K562 (cell line): ENCODE measurements at regions of chr1 and their contacts with region 1.

Region 1: GRCh38 chr1:108708691-108709660 is 3.7 kb upstream of the FNDC7 start:
- DNase-seq: peak in 3 of 4 experiments; percentile 29 to 80 (median 59)
- ATAC-seq: peak; percentile 91
- H3K4me3 ChIP-seq: no peak overlapping the region
- H3K27ac ChIP-seq: no peak overlapping the region
- H3K4me1 ChIP-seq: no peaks in the 10 kb centered on the region
- H3K27me3 ChIP-seq: peaks cover 0 to 3% of the 10 kb centered on the region in 2 experiments; a peak in 1 of 5 replicates
- CTCF ChIP-seq: peak; percentile 82 to 89 (median 86)
- EP300 ChIP-seq: no peak
- POLR2A ChIP-seq: no peak
- RAD21 ChIP-seq: peak; percentile 50 to 80

Region 2: DNA sequence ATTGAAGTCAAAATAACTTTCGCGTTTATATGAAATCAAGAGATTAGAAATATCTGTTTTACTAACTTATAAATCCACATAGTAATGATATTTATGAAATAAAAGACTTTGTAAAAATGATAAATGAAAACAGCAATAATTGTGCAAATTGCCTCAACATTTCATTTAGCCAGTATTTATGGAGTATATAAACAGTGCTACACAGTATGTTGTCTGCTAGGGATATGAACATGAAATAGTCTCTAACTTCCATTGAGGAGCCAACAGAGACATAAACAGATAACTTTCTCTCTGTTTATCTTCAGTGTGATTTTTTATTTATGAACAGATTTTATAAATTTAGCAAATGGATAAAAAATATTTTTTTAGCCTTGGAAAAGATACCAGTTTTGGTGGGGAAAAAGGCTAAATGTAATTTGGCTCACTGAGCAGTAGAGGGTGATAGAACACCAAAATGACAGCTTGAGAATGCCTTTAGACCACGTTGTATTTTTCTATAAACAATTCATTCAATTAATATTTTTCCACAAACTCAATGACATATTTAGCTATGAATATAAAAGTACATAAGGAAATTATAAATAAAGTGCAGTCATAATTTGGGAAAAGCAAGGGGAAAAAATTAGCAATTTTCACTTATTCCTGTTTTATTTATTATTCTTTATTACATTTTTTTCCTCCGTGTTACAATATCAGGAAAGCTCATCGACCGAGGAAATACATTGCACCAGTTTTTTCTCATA is 196.6 kb before region 1 on chr1:
- CTCF ChIA-PET with region 1: no interaction called
- POLR2A ChIA-PET with region 1: interaction called, 3 read pairs
- in situ Hi-C with region 1: no loop called
- intact Hi-C with region 1: loop called (anchors 2 kb)
- DNase-seq: peak; percentile 31 to 68 (median 48)
- ATAC-seq: peak; percentile 87
- H3K4me3 ChIP-seq: no peak overlapping the region
- H3K27ac ChIP-seq: no peak overlapping the region
- H3K4me1 ChIP-seq: no peaks in the 10 kb centered on the region
- H3K27me3 ChIP-seq: no peaks in the 10 kb centered on the region
- CTCF ChIP-seq: peak; percentile 77 to 99 (median 81)
- EP300 ChIP-seq: no peak
- POLR2A ChIP-seq: no peak
- RAD21 ChIP-seq: peak; percentile 100

Region 3: GRCh38 chr1:108691942-108692723 is 16.8 kb before region 1 on chr1 and contains the start of gene PRPF38B:
- CTCF ChIA-PET with region 1: no interaction called
- POLR2A ChIA-PET with region 1: interaction called, 97 read pairs
- in situ Hi-C with region 1: no loop called
- intact Hi-C with region 1: no loop called
- DNase-seq: peak; percentile 96 to 99 (median 98)
- ATAC-seq: peak; percentile 91
- H3K4me3 ChIP-seq: peak within 1 kb of the TSS; percentile 74
- H3K27ac ChIP-seq: peak within 1 kb of the TSS; percentile 94
- H3K4me1 ChIP-seq: peaks cover 5 to 7% of the 10 kb centered on the region in 2 experiments; a peak in 3 of 5 replicates
- H3K27me3 ChIP-seq: no peaks in the 10 kb centered on the region
- CTCF ChIP-seq: no peak
- EP300 ChIP-seq: 0 out of 2 replicates have a peak, but pooled peaks have one; percentile 10
- POLR2A ChIP-seq: peak; percentile 99
- RAD21 ChIP-seq: no peak
- polyA plus RNA-seq, gene PRPF38B: 25.3 to 34.3 TPM

Region 4: GRCh38 chr1:108719656-108720435 is 10.9 kb after region 1 on chr1:
- CTCF ChIA-PET with region 1: no interaction called
- POLR2A ChIA-PET with region 1: interaction called, 12 read pairs
- in situ Hi-C with region 1: no loop called
- intact Hi-C with region 1: no loop called
- DNase-seq: peak; percentile 27 to 51 (median 34)
- ATAC-seq: peak; percentile 73
- H3K4me3 ChIP-seq: no peak overlapping the region
- H3K27ac ChIP-seq: no peak overlapping the region; the same call in 2 of the 3 replicates
- H3K4me1 ChIP-seq: peaks cover 0 to 10% of the 10 kb centered on the region in 2 experiments; a peak in 3 of 5 replicates
- H3K27me3 ChIP-seq: peaks cover 19 to 20% of the 10 kb centered on the region in 2 experiments; a peak in 4 of 5 replicates
- CTCF ChIP-seq: no peak
- EP300 ChIP-seq: no peak
- POLR2A ChIP-seq: no peak
- RAD21 ChIP-seq: no peak

Region 5: GRCh38 chr1:108816049-108816893 is 107.3 kb after region 1 on chr1:
- CTCF ChIA-PET with region 1: no interaction called
- POLR2A ChIA-PET with region 1: no interaction called
- in situ Hi-C with region 1: no loop called
- intact Hi-C with region 1: loop called (anchors 5 kb)
- DNase-seq: peak; percentile 25 to 53 (median 35)
- ATAC-seq: peak; percentile 74
- H3K4me3 ChIP-seq: no peak overlapping the region
- H3K27ac ChIP-seq: no peak overlapping the region
- H3K4me1 ChIP-seq: peaks cover 0 to 14% of the 10 kb centered on the region in 2 experiments; a peak in 3 of 5 replicates
- H3K27me3 ChIP-seq: no peaks in the 10 kb centered on the region
- CTCF ChIP-seq: no peak
- EP300 ChIP-seq: no peak
- POLR2A ChIP-seq: no peak
- RAD21 ChIP-seq: no peak